Breast epithelium (tissue), 4 donors: ENCODE measurements at regions of chr1 and their contacts with region 1.

Region 1: GRCh38 chr1:154751690-154752089 is 118.4 kb downstream of the KCNN3 start:
- DNase-seq: no peak
- H3K4me3 ChIP-seq: no peak overlapping the region
- H3K27ac ChIP-seq: peak overlapping the region in 1 of 2 donors; percentile 43
- H3K4me1 ChIP-seq: no peaks in the 10 kb centered on the region
- H3K27me3 ChIP-seq: no peaks in the 10 kb centered on the region
- CTCF ChIP-seq: no peak
- POLR2A ChIP-seq: no peak

Region 2: DNA sequence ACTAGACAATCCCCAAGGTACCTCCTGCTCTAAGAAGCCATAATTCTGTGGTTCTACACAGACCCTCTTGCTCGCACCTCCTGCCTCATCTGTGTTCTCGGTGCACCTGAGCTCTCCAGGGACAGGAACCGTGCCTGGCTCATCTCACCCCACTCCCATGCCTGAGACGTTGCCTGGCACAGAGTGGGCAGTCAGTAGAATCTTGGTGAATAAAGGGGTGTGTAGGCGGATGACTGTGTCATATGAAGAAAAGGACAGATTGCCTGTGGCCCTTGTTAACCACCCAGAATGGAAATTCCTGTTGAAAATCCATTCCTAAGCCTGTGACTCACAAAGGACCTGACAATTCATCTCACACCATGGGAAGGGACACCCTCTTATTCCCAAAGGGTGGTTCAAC is 25.5 kb after region 1 on chr1:
- intact Hi-C with region 1: loop called (anchors 1 kb)
- DNase-seq: no peak
- H3K4me3 ChIP-seq: no peak overlapping the region
- H3K27ac ChIP-seq: no peak overlapping the region
- H3K4me1 ChIP-seq: no peaks in the 10 kb centered on the region
- H3K27me3 ChIP-seq: no peaks in the 10 kb centered on the region
- CTCF ChIP-seq: no peak
- POLR2A ChIP-seq: no peak